AG04450 (cell line): ENCODE measurements at regions of chr21 and their contacts with region 1.

Region 1: GRCh38 chr21:36040389-36040788 is 19.9 kb downstream of the SETD4 start:
- DNase-seq: no peak
- H3K4me3 ChIP-seq: no peak overlapping the region
- H3K27ac ChIP-seq: no peak overlapping the region
- H3K27me3 ChIP-seq: no peaks in the 10 kb centered on the region
- CTCF ChIP-seq: no peak

Region 2: GRCh38 chr21:35616090-35616489 is 424.3 kb before region 1 on chr21:
- CTCF ChIA-PET with region 1: no interaction called
- POLR2A ChIA-PET with region 1: no interaction called
- DNase-seq: no peak
- H3K4me3 ChIP-seq: no peak overlapping the region
- H3K27ac ChIP-seq: no peak overlapping the region
- H3K27me3 ChIP-seq: no peaks in the 10 kb centered on the region
- CTCF ChIP-seq: peak; percentile 55

Region 3: DNA sequence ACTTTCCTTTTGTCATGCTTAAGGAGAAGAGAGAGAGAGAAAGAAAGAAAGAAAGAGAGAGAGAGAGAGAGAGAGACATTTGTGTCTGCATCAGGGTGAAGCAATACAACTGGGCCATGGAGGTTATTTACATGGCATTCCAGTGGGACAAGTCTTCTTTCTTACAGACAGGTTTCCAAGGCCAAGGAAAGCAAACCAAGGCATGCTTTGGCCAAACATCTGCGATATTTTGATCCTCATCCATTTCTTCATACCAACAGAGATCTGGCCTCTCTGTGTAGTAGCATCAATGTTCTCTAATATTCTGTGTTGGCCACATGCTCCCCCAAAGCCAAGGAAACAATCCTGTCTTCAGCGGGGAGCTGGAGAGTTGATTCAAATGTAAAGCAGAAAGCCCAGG is 272.2 kb before region 1 on chr21:
- CTCF ChIA-PET with region 1: no interaction called
- POLR2A ChIA-PET with region 1: no interaction called
- DNase-seq: no peak
- H3K4me3 ChIP-seq: no peak overlapping the region
- H3K27ac ChIP-seq: no peak overlapping the region
- H3K27me3 ChIP-seq: no peaks in the 10 kb centered on the region
- CTCF ChIP-seq: no peak

Region 4: DNA sequence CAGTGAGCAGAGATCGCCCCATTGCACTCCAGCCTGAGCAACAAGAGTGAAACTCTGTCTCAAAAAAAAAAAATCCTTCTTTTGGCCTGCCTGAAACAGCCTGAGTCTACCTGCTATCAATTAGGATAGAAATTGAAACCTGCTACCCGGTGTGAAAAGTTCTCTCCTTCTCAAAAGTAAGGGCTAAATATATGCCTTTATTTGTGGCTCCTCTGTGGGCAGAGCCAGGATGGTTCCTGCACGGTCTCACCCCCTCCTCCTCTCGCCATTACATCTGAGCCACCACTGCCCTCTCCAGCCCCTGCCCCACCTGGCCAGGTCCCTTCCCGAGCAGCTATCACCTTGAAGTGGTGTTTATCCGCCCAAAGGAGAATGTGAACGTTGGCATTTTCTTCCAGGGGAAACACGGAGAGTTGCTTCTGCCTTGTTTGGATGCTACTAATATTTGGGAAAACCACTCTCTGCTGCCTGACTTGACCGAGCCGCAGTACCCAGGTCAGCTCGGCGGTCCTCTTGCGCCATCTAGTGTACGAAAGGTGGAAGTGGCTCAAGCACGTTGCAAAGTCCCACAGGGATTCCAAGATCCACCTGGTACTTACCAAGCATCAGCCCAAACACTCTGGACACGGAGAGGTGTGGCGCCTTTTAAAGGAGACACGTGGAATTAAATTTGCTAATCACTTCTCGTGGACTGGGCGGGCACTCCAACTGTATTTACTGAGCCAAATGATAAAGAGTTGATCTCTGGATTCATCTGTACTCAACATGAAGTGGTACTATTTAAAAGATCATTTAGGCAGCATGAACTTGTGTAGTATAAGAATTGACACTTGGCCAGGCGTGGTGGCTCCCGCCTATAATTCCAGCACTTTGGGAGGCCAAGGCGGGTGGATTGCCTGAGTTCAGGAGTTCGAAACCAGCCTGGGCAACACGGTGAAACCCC is 12.0 kb before region 1 on chr21:
- CTCF ChIA-PET with region 1: interaction called, 10 read pairs
- POLR2A ChIA-PET with region 1: interaction called, 3 read pairs
- DNase-seq: peak; percentile 52
- H3K4me3 ChIP-seq: peak overlapping the region; percentile 7; the same call in 1 of the 2 replicates
- H3K27ac ChIP-seq: no peak overlapping the region
- H3K27me3 ChIP-seq: no peaks in the 10 kb centered on the region
- CTCF ChIP-seq: peak; percentile 97